Mammary epithelial cell (primary cell): ENCODE measurements at regions of chr19 and their contacts with region 1.

Region 1: DNA sequence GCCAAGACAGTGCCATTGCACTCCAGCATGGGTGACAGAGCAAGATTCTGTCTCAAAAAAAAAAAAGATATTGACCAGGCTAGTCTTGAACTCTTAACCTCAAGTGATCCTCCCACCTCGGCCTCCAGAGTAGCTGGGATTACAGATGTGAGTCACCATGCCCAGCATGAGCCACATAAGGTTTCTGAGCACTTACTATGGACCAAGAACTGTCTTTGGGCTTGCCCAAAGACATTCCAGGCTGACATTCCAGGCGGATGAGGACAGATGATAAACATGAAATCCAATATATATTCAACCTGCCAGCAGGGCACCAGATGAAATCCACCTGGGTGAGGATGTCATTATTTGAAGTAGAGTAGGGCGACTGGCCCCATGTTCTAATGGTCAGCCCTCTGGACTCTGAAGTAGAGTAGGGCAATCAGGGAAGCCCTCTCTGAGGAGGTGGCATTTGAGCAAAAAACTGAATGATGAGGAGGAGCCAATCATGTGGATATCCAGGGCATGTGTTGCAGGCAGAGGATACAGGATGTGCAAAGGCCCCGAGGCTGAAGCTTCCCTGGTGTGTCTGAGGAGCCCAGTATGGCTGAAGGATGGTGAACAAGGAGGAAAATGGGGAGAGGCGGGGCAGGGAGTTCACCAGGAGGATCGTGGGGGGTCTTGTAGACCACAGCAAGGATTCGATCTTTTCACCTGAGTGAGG is 4.0 kb downstream of the C19orf38 start:
- DNase-seq: peak; percentile 46
- H3K4me3 ChIP-seq: no peak overlapping the region
- H3K27ac ChIP-seq: no peak overlapping the region
- H3K4me1 ChIP-seq: no peaks in the 10 kb centered on the region
- H3K27me3 ChIP-seq: no peaks in the 10 kb centered on the region
- CTCF ChIP-seq: no peak

Region 2: DNA sequence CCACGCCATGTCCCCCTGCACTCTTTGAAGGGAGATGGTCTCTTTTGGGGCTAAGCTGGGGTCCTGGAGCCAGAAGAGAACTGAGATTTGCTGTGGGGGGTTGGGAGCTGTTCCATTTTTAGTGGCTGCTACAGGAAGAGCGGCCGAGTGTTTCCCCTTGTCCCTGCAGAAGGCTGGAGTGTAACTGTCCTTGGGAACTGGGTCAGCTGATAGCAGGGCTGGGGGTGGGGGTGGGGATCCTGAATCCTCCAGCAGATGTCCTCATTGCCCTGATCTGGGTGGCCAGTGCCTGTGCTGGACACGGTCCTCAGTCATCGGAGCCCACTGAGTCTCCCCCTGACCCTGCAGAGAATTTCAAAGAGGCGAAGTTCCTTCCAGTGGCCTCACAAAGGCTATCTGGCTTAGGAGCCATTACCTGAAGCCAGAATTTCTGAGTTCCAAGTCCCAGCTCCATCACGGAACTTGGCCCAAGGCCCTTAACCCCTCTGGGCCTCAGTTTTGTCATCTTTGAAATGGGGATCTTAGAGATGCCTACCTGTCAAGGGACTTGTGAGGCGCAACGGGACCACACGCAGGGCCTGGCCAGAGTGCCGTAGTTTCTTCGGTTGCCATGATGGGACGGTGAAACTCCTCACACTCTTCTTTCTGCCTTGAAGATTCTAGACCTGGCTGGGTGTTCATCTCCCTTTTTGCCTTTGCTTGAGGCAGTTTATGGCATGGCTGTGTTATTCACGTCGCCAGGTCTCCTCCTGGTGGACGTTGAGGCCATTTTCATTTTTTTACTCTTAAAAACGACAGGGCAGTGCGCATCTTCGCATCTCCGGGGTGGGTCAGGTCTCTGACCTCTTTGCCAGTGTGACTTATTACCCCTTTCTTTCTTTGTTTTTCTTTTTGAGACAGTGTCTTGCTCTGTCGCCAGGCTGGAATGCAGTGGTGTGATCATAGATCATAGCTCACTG is 82.4 kb before region 1 on chr19:
- CTCF ChIA-PET with region 1: no interaction called
- dilution Hi-C with region 1: loop called (anchors 5 kb)
- in situ Hi-C with region 1: no loop called
- intact Hi-C with region 1: no loop called
- DNase-seq: no peak
- H3K4me3 ChIP-seq: no peak overlapping the region
- H3K27ac ChIP-seq: no peak overlapping the region
- H3K4me1 ChIP-seq: peaks cover 5% of the 10 kb centered on the region
- H3K27me3 ChIP-seq: no peaks in the 10 kb centered on the region
- CTCF ChIP-seq: no peak

Region 3: GRCh38 chr19:10812902-10813404 is 39.3 kb before region 1 on chr19:
- CTCF ChIA-PET with region 1: no interaction called
- dilution Hi-C with region 1: no loop called
- in situ Hi-C with region 1: no loop called
- intact Hi-C with region 1: no loop called
- DNase-seq: peak; percentile 59
- H3K4me3 ChIP-seq: no peak overlapping the region
- H3K27ac ChIP-seq: no peak overlapping the region
- H3K4me1 ChIP-seq: peaks cover 21% of the 10 kb centered on the region
- H3K27me3 ChIP-seq: no peaks in the 10 kb centered on the region
- CTCF ChIP-seq: no peak

Region 4: GRCh38 chr19:10921199-10921879 is 69.1 kb after region 1 on chr19:
- CTCF ChIA-PET with region 1: no interaction called
- dilution Hi-C with region 1: no loop called
- in situ Hi-C with region 1: no loop called
- intact Hi-C with region 1: no loop called
- DNase-seq: no peak
- H3K4me3 ChIP-seq: no peak overlapping the region
- H3K27ac ChIP-seq: no peak overlapping the region
- H3K4me1 ChIP-seq: no peaks in the 10 kb centered on the region
- H3K27me3 ChIP-seq: no peaks in the 10 kb centered on the region
- CTCF ChIP-seq: no peak